ENCODE measurements at regions of chr16 and their contacts with region 1.

Region 1: DNA sequence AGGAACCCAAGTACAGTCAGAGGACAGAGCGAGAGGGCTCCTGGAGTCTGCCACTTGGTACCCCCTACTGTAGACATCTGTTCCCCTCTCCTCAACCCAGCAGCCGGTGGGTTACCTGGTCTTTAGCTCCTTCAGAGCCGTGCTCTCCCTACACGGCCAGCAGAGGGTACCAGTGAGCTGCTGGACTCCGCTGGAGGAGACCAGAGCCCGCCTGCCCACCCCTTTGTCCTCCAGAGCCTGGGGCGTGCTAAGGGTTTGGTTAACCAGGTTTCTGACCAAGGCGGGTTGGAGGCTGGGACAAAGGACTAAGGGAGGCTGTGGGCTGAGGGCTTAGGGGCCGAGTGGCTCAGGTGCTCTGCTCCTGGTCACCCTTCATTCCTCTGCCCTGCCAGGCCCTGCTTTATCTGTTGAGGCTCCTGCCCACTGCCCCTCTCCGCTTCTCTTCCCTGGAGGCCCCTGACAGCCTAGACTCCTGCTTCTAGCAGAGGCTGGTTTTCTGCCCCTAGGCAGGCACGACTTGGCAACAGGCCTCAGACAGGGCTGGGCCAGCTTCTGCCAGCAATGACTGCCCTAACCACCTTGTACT is 2.7 kb upstream of the HSD11B2 start:
- DNase-seq: peak; percentile 71
- H3K4me3 ChIP-seq: no peak overlapping the region
- H3K27ac ChIP-seq: no peak overlapping the region
- H3K4me1 ChIP-seq: peaks cover 29% of the 10 kb centered on the region
- H3K27me3 ChIP-seq: peaks cover 3% of the 10 kb centered on the region
- CTCF ChIP-seq: peak; percentile 87

Region 2: DNA sequence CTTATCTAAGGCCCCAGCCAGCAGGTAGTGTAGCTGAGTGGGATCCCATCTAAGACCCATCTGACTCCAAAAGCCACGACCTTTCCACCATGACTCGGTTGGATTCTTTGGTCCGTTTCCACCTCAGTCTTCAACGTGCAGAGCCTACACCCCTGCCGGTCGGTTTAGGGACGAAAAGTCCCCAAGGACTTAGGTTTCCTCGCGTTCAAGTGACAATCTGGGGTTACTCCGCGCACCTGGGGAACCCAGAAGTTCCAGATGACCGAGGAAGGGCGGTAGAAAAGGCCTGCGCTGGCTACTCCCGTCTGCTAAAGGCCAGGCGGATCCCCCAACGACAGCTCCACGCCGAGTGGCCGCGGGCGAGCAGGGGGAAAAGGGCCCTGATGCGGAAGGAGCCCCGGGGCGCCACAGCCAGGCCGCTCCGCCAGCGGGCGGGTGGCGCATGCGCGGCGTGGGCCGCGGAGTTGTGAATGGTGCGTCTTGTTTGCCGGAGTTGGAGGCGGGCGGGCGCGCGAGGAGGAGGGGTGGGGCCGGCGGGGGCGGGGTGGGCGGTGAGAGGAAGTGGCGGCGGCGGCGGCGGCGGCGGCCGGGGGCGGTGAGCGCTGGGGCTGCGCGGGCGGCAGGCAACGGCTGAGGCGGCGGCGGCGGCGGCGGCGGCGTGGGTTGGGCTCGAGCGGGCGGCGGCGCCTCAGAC is 399.5 kb before region 1 on chr16 and contains the start of gene CBFB:
- CTCF ChIA-PET with region 1: interaction called, 10 read pairs
- POLR2A ChIA-PET with region 1: no interaction called
- intact Hi-C with region 1: no loop called
- DNase-seq: peak; percentile 96
- H3K4me3 ChIP-seq: peak within 1 kb of the TSS; percentile 96
- H3K27ac ChIP-seq: peak within 1 kb of the TSS; percentile 97
- H3K4me1 ChIP-seq: peaks cover 36% of the 10 kb centered on the region
- H3K27me3 ChIP-seq: no peaks in the 10 kb centered on the region
- CTCF ChIP-seq: no peak; the same call in 1 of the 2 replicates
- total RNA-seq, gene CBFB: 173 and 185 TPM in 2 replicates

Region 3: GRCh38 chr16:67447508-67448076 is 19.4 kb after region 1 on chr16:
- CTCF ChIA-PET with region 1: interaction called, 10 read pairs
- POLR2A ChIA-PET with region 1: no interaction called
- intact Hi-C with region 1: no loop called
- DNase-seq: peak; percentile 72
- H3K4me3 ChIP-seq: no peak overlapping the region
- H3K27ac ChIP-seq: no peak overlapping the region
- H3K4me1 ChIP-seq: no peaks in the 10 kb centered on the region
- H3K27me3 ChIP-seq: no peaks in the 10 kb centered on the region
- CTCF ChIP-seq: peak; percentile 74

Region 4: DNA sequence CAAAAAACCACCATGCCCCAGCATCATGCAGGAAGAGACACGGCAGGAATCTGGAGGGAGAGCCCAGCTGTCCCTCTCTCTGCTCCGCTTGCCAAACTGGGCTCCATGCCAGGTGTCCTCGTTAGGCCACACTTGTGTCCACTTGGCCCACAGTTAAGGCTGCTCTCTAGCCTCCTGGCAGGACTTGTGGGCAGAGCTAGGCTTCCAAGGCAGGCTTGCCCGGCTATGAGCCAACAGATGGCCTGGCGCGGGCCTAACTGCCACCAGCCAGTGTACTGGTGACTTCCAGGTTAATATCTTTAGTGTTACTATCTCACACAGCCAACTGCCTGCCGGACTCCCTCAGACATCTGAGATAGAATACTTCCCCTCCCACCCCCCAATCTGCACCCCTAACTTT is 42.1 kb after region 1 on chr16:
- CTCF ChIA-PET with region 1: interaction called, 8 read pairs
- POLR2A ChIA-PET with region 1: no interaction called
- intact Hi-C with region 1: loop called (anchors 5 kb)
- DNase-seq: no peak
- H3K4me3 ChIP-seq: no peak overlapping the region
- H3K27ac ChIP-seq: no peak overlapping the region
- H3K4me1 ChIP-seq: peaks cover 3% of the 10 kb centered on the region
- H3K27me3 ChIP-seq: no peaks in the 10 kb centered on the region
- CTCF ChIP-seq: no peak

Region 5: DNA sequence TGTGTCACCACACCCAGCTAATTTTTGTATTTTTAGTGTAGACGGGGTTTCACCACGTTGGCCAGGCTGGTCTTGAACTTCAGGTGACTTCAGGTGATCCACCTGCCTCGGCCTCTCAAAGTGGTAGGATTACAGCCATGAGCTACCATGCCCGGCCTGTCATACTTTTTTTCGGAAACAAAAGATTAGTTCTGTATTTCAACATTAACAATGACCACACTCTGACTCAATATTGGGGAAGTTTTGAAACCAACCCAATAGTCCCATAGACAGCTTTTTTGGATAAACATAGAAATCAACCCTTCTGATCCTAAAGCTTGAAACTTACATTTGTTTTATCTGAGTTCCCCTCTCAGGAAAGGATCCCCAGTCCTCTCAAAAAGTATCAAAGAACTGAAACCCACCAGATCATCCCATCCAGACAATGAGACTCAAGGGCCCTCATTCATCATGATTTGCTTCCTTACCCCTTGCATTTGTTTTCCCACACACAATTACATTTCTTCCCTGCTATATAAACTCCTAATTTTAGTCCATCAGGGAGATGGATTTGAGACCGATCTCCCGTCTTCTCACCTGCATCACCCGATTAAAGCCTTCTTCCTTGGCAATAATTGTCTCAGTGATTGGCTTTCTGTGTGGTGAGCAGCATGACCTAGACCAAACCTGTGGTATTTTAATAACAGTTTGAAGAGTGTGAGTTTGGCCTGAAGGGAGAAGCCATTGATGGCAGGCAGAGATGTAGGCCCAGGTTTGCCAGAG is 62.3 kb after region 1 on chr16:
- CTCF ChIA-PET with region 1: no interaction called
- POLR2A ChIA-PET with region 1: no interaction called
- intact Hi-C with region 1: no loop called
- DNase-seq: no peak
- H3K4me3 ChIP-seq: no peak overlapping the region
- H3K27ac ChIP-seq: no peak overlapping the region
- H3K4me1 ChIP-seq: no peaks in the 10 kb centered on the region
- H3K27me3 ChIP-seq: no peaks in the 10 kb centered on the region
- CTCF ChIP-seq: no peak

Region 6: DNA sequence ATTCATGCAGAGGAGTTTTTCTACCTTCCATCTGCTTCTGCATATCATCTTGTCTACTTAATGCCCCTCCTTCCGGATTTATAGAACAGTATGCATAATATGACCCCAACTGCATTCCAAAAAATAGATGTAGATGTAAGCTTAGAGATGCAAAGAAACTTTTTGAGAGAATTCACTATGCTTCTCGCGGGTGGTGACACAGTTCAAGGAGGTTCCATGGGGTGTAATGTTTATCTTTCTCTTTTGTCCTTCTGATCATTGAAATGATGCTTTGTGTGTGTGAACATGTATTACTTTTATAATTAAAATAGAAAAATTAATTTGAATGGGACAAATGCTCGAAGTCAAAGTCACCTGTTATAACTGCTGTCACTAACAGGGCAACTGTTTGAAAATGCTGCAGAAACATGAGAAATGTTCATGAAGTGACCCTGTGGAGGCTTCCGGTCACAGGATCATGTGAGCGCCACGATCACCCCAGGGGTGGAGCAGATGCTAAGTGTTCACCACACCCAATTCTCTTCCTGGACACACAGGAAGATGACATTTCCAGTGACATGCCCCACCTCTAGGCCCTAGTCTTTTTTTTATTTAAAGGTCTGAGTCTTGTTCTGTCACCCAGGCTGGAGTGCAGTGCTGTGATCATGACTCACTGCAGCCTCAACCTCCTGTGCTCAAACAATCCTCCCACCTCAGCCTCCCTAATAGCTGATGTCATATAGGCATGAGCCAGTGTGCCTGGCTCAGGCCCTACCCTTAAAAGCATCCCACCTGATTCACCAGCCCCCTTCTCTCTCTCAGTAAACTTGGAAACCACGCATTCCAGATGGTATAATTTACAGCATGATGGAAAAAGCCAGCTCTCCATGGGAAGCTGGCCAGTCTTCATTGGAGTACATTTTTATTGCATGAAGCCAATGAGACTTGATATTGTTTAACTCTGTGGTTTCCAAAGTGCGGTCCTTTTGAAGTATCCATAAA is 76.1 kb after region 1 on chr16:
- CTCF ChIA-PET with region 1: no interaction called
- POLR2A ChIA-PET with region 1: interaction called, 15 read pairs
- intact Hi-C with region 1: no loop called
- DNase-seq: no peak
- H3K4me3 ChIP-seq: no peak overlapping the region
- H3K27ac ChIP-seq: no peak overlapping the region
- H3K4me1 ChIP-seq: no peaks in the 10 kb centered on the region
- H3K27me3 ChIP-seq: no peaks in the 10 kb centered on the region
- CTCF ChIP-seq: no peak

Region 7: GRCh38 chr16:67546761-67547422 is 118.7 kb after region 1 on chr16:
- CTCF ChIA-PET with region 1: no interaction called
- POLR2A ChIA-PET with region 1: no interaction called
- intact Hi-C with region 1: no loop called
- DNase-seq: peak; percentile 84
- H3K4me3 ChIP-seq: no peak overlapping the region
- H3K27ac ChIP-seq: peak overlapping the region; percentile 47
- H3K4me1 ChIP-seq: no peaks in the 10 kb centered on the region
- H3K27me3 ChIP-seq: no peaks in the 10 kb centered on the region
- CTCF ChIP-seq: peak; percentile 98

Measured in A673 (cell line).